IMR-90 (cell line): ENCODE measurements at regions of chr13 and their contacts with region 1.

Region 1: GRCh38 chr13:41652727-41653361 is 195.5 kb downstream of the RGCC start:
- DNase-seq: peak; percentile 79
- ATAC-seq: peak; percentile 67
- H3K4me3 ChIP-seq: no peak overlapping the region
- H3K27ac ChIP-seq: peak overlapping the region; percentile 44; the same call in 1 of the 2 replicates
- H3K4me1 ChIP-seq: peaks cover 10% of the 10 kb centered on the region
- H3K27me3 ChIP-seq: no peaks in the 10 kb centered on the region
- CTCF ChIP-seq: peak; percentile 87
- POLR2A ChIP-seq: no peak
- RAD21 ChIP-seq: peak; percentile 92

Region 2: GRCh38 chr13:41075034-41075433 is 577.8 kb before region 1 on chr13:
- CTCF ChIA-PET with region 1: no interaction called
- POLR2A ChIA-PET with region 1: no interaction called
- dilution Hi-C with region 1: no loop called
- in situ Hi-C with region 1: no loop called
- intact Hi-C with region 1: loop called (anchors 2 kb)
- DNase-seq: peak; percentile 49
- ATAC-seq: peak; percentile 59
- H3K4me3 ChIP-seq: no peak overlapping the region
- H3K27ac ChIP-seq: no peak overlapping the region
- H3K4me1 ChIP-seq: no peaks in the 10 kb centered on the region
- H3K27me3 ChIP-seq: no peaks in the 10 kb centered on the region
- CTCF ChIP-seq: peak; percentile 76
- POLR2A ChIP-seq: no peak
- RAD21 ChIP-seq: peak; percentile 83

Region 3: DNA sequence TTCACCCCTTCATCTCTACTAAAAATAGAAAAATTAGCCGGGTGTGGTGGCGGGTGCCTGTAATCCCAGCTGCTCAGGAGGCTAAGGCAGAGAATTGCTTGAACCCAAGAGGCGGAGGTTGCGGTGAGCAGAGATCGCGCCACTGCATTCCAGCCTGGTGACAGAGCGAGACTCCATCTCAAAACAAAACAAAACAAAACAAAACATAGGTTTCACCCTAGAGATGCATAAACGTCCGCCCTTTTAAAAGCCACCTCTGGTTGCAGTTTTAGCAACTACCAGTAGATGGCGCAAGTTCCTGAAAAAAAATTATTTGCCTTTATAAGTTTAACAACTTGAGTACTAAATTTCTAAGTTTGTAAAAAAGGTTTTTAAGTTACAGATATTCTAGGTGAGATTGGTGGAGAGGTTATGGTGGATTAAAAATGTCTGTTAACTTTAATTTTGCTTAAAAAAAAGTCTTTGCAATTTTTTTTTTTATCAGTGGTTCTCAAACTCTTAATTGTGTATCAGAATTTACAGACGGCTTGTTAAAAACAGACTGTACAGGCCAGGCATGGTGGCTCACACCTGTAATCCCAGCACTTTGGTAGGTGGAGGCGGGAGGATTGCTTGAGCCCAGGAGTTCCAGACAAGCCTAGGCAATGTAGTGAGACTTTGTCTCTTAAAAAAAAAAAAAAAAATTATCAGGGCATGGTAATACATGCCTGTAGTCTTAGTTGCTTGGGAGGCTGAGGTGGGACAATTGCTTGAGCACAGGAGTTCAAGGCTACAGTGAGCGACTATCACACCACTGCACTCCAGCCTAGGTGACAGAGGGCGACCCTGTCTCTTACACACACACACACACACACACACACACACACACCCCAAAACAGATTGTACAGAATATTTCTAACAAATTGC is 299.7 kb before region 1 on chr13:
- CTCF ChIA-PET with region 1: no interaction called
- POLR2A ChIA-PET with region 1: no interaction called
- dilution Hi-C with region 1: no loop called
- in situ Hi-C with region 1: no loop called
- intact Hi-C with region 1: loop called (anchors 5 kb)
- DNase-seq: peak; percentile 59
- ATAC-seq: peak; percentile 77
- H3K4me3 ChIP-seq: no peak overlapping the region
- H3K27ac ChIP-seq: peak overlapping the region; percentile 19; the same call in 1 of the 2 replicates
- H3K4me1 ChIP-seq: peaks cover 3% of the 10 kb centered on the region
- H3K27me3 ChIP-seq: no peaks in the 10 kb centered on the region
- CTCF ChIP-seq: peak; percentile 71
- POLR2A ChIP-seq: no peak
- RAD21 ChIP-seq: peak; percentile 53

Region 4: GRCh38 chr13:41384755-41385503 is 267.9 kb before region 1 on chr13:
- CTCF ChIA-PET with region 1: interaction called, 3 read pairs
- POLR2A ChIA-PET with region 1: no interaction called
- dilution Hi-C with region 1: no loop called
- in situ Hi-C with region 1: loop called (anchors 10 kb)
- intact Hi-C with region 1: loop called (anchors 1 kb)
- DNase-seq: peak; percentile 15
- ATAC-seq: no peak
- H3K4me3 ChIP-seq: no peak overlapping the region
- H3K27ac ChIP-seq: no peak overlapping the region
- H3K4me1 ChIP-seq: peaks cover 3% of the 10 kb centered on the region; the same call in 1 of the 2 replicates
- H3K27me3 ChIP-seq: no peaks in the 10 kb centered on the region
- CTCF ChIP-seq: peak; percentile 47
- POLR2A ChIP-seq: no peak
- RAD21 ChIP-seq: peak; percentile 47; the same call in 1 of the 2 replicates

Region 5: GRCh38 chr13:41411522-41411921 is 241.3 kb before region 1 on chr13:
- CTCF ChIA-PET with region 1: interaction called, 12 read pairs
- POLR2A ChIA-PET with region 1: no interaction called
- dilution Hi-C with region 1: no loop called
- in situ Hi-C with region 1: no loop called
- intact Hi-C with region 1: loop called (anchors 1 kb)
- DNase-seq: peak; percentile 71
- ATAC-seq: peak; percentile 98
- H3K4me3 ChIP-seq: no peak overlapping the region
- H3K27ac ChIP-seq: no peak overlapping the region
- H3K4me1 ChIP-seq: no peaks in the 10 kb centered on the region
- H3K27me3 ChIP-seq: no peaks in the 10 kb centered on the region
- CTCF ChIP-seq: peak; percentile 67
- POLR2A ChIP-seq: no peak
- RAD21 ChIP-seq: peak; percentile 78

Region 6: DNA sequence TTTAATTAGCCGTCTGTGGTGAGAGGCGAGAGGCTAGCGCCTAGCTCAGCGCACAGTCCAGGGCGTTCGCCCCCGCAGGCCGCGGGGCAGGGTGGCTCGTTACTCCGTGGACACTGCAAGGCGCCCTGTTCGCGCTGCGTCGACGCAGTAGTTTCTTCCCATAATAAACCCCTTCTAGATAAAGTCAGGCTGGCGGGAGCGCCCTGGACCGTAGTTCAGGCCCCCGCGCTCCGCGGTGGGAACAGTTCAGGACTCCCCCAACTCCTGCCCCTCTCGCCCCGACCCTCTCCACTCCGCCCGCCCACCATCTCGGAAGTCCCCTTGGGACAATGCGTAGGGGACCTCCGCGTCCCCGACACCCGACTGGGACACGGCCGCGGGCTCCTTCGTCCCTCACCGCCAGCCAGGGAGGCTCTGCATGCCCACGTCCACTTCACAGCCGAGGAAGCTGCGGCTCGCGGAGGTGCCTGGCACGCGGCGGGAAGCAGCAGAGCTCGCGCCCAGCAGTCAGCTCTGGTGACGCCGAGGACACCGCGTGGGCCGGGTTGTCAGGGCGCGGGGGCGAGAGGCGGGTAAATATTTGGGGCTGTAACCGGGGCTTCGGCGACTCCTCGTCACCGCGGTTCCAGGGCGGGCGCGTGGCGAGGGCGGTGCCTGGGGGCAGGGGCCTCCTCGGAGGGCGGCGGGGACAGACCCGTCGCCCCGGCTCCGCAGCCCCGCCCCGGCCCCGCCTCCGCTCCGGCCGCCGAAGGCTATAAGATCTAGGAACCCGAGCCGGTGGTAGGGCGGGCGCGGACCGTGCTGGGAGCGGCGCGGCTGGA is 195.9 kb before region 1 on chr13 and contains the start of gene RGCC:
- CTCF ChIA-PET with region 1: interaction called, 18 read pairs
- POLR2A ChIA-PET with region 1: interaction called, 3 read pairs
- dilution Hi-C with region 1: no loop called
- in situ Hi-C with region 1: loop called (anchors 25 kb)
- intact Hi-C with region 1: loop called (anchors 1 kb)
- DNase-seq: peak; percentile 49
- ATAC-seq: peak; percentile 92
- H3K4me3 ChIP-seq: peak within 1 kb of the TSS; percentile 81
- H3K27ac ChIP-seq: peak within 1 kb of the TSS; percentile 45
- H3K4me1 ChIP-seq: peaks cover 6% of the 10 kb centered on the region
- H3K27me3 ChIP-seq: peaks cover 10% of the 10 kb centered on the region
- CTCF ChIP-seq: no peak
- POLR2A ChIP-seq: no peak
- RAD21 ChIP-seq: no peak
- total RNA-seq, gene RGCC: 6.1 and 7.5 TPM in 2 replicates

Region 7: DNA sequence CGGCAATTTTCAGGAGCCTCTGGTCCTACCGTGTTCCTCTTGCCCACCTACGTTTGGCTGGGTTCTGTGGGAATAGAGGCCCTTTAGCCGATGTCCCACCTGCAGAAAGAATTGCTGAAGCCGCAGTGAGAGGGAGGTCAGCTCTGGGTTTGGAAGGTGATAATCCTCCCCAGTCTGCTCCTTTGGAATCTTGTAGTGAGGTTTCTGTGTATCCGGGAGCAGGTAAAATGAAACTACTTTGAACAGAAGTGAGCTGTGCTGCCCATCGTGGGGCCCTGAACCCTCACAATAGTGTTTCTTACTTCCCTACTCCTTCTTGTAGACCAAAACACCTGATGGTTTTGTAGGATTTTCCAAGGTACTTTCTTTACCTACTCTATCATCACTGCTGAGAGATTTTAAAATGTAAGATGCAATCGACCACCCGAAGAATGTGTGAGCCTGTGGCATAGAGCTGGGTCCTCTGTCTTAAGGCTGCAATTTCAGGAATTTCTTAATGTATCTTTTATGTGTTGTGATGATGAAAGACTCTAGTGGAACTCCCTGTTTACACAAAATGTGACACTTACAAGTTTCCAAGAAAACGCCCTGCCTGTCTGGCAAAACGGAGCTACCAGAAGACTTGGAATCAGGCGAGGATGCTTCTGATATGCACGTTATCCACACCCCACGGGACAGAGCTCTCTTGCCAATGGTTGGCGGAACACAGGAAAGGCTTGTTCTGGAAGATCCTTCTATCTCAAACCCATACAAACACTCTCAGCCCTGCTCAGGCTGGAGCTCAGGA is 119.4 kb before region 1 on chr13:
- CTCF ChIA-PET with region 1: no interaction called
- POLR2A ChIA-PET with region 1: no interaction called
- dilution Hi-C with region 1: no loop called
- in situ Hi-C with region 1: no loop called
- intact Hi-C with region 1: no loop called
- DNase-seq: no peak
- ATAC-seq: peak; percentile 48; the same call in 1 of the 2 replicates
- H3K4me3 ChIP-seq: no peak overlapping the region
- H3K27ac ChIP-seq: no peak overlapping the region
- H3K4me1 ChIP-seq: peaks cover 3% of the 10 kb centered on the region
- H3K27me3 ChIP-seq: no peaks in the 10 kb centered on the region; the same call in 1 of the 2 replicates
- CTCF ChIP-seq: no peak
- POLR2A ChIP-seq: no peak
- RAD21 ChIP-seq: no peak

Region 8: DNA sequence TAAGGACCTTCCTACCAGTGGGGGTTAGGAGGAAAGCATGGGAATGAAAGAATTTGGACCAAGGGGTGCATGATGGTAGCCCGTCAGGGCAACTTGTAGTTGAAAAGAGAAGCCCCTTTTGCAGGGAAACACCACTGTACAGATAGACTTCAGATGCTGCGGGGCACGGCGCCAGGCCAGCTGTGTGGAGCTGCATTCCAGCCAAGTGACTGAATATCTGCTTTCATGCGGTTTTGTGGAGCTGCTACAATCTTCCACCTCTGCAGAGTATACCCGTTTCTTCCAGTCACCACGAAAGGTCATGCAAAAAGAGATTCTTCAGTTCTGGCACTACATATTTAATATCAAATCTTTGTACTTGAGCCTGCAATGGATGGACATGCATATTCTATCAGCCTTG is 90.8 kb before region 1 on chr13:
- CTCF ChIA-PET with region 1: no interaction called
- POLR2A ChIA-PET with region 1: no interaction called
- dilution Hi-C with region 1: no loop called
- in situ Hi-C with region 1: no loop called
- intact Hi-C with region 1: loop called (anchors 10 kb)
- DNase-seq: peak; percentile 92
- ATAC-seq: peak; percentile 77
- H3K4me3 ChIP-seq: no peak overlapping the region
- H3K27ac ChIP-seq: no peak overlapping the region
- H3K4me1 ChIP-seq: peaks cover 23% of the 10 kb centered on the region
- H3K27me3 ChIP-seq: no peaks in the 10 kb centered on the region
- CTCF ChIP-seq: no peak
- POLR2A ChIP-seq: no peak
- RAD21 ChIP-seq: 0 out of 2 replicates have a peak, but pooled peaks have one; percentile 26

Region 9: DNA sequence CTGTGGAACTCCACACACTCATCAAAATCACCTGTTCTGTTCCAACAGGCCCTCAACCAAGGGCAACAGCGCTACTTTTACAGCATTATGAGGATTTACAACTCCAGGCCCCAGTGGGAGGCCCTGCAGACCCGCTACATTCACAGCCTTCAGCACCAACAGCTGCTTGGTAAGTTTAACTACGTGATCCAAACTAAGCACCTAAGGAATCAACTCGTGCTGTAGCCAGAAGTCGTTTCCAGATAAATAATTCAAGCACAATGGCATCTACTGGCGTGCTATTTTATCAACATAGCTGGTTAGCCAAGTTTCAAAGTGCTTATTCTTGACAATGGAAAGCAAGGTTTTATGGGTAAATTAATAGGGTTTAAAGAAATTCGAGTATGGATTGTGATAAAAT is 1133.9 kb after region 1 on chr13:
- CTCF ChIA-PET with region 1: no interaction called
- POLR2A ChIA-PET with region 1: no interaction called
- dilution Hi-C with region 1: no loop called
- in situ Hi-C with region 1: no loop called
- intact Hi-C with region 1: no loop called
- DNase-seq: no peak
- ATAC-seq: no peak
- H3K4me3 ChIP-seq: no peak overlapping the region
- H3K27ac ChIP-seq: no peak overlapping the region
- H3K4me1 ChIP-seq: no peaks in the 10 kb centered on the region
- H3K27me3 ChIP-seq: no peaks in the 10 kb centered on the region; the same call in 1 of the 2 replicates
- CTCF ChIP-seq: no peak
- POLR2A ChIP-seq: no peak
- RAD21 ChIP-seq: no peak